ENCODE measurements at regions of chr11 and their contacts with region 1.

Region 1: GRCh38 chr11:101848262-101848661 is 66.5 kb upstream of the CEP126 start:
- DNase-seq: no peak
- CTCF ChIP-seq: no peak

Region 2: DNA sequence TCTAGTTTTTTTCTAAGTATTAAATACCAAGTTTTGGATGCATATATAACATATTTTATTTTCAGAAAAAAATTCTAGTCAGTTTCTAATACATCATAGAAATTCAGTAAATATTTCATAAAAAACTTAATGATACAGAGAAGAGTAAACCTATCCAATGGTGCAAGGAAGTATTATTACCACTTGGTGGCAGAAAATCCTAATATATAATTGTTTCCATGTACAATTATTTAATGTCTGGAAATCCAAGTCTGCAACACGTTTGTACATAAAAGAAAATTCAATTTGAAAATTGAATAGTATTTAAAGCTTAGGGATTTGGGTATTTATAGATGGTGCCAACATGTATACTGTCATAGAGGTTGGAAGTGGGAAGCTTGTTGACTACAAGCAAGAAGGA is 391.4 kb before region 1 on chr11:
- in situ Hi-C with region 1: loop called (anchors 25 kb)
- DNase-seq: no peak
- CTCF ChIP-seq: no peak

Region 3: DNA sequence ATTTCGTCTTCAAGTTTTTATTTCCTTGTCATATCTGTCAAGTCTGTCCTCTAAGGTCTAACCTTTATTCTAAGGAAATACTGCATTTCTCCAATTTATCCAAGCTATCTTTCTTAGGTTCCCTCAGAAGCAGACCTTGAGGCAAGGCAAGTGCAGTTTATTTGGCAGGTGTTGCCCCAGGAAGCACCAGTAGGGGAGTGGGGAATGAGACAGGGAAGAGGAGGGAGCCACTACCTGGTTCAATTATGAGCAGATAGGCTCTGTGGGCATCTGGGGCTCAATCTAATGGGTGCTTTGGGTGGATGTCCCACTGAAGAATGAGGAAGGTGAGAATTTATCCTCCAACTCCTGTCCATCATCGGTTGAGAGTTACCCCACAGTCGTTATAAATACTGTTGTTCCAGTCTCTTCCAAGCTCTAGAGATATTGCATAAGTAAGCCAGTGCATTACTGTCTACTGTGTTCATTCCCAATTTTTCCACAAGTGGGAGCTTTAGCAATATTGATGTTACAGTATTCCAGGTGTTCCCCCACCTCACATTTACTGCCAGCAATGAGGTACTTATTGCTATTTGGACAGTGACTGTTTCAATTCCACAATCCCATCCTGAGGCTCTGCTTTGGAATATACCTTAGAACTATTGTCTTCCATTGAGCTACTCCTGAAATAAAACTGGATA is 88.4 kb before region 1 on chr11:
- in situ Hi-C with region 1: no loop called
- DNase-seq: no peak
- CTCF ChIP-seq: no peak

Region 4: DNA sequence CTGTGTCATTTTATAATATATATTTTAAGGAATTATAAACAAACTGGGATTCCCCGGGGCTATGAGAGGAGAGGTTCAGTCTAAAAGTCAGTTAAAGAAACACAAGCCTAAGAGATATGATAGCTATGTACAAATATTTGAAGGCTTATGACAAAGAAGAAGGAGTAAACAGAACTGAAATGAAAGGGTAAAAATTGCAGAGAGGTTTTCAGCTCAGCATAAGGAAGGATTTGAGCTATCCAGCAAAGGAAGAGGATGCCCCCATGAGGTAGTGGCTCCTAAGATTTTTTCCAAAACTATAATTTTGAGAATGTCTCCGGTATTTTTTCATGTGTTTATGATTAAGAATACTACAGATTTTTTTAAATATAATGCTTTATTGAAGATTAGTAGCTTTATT is 126.0 kb after region 1 on chr11:
- in situ Hi-C with region 1: no loop called
- DNase-seq: no peak
- CTCF ChIP-seq: no peak

Region 5: DNA sequence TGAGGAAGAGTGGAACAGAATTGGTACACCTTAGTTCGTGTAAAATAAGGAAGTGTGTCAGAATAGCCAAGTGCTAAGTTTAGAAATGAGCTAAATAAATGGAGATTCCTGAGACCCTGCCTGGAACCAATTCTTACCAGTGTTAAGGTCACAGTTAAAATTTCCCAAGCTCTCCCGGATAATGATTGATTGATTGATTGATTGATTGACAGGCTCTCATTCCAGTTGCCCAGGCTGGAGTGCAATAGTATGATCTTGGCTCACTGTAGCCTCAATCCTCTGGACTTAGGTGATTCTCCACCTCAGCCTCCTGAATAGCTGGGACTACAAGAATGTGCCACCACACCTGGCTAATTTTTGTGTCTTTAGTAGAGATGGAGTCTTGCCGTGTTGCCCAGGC is 282.0 kb after region 1 on chr11:
- in situ Hi-C with region 1: no loop called
- DNase-seq: no peak
- CTCF ChIP-seq: no peak

Measured in GM13976 (cell line).